ENCODE measurements at regions of chr13 and their contacts with region 1.

Region 1: GRCh38 chr13:95536632-95537241 is 15.8 kb upstream of the CLDN10 start:
- DNase-seq: no peak
- ATAC-seq: no peak

Region 2: GRCh38 chr13:95480131-95480545 is 56.6 kb before region 1 on chr13:
- intact Hi-C with region 1: no loop called
- DNase-seq: no peak
- ATAC-seq: peak; percentile 35 to 82

Region 3: GRCh38 chr13:95660981-95661581 is 124.3 kb after region 1 on chr13:
- intact Hi-C with region 1: loop called in 1 of 2 experiments (anchors 10 kb)
- DNase-seq: no peak
- ATAC-seq: no peak